Activated T-helper 1 cell treated with anti-CD3 and anti-CD28 coated beads, Interleukin-12 subunit alpha, Interleukin-12 subunit beta, Interleukin-2, Interleukin-4 antibody, amounts not matched to agents 30 ng/mL and 10 ng/mL and 1 ng/mL, durations not matched to agents 14 hours and 24 hours and 36 hours (primary cell): ENCODE measurements at regions of chr20 and their contacts with region 1.

Region 1: GRCh38 chr20:1894951-1895673 is at the start of gene SIRPA:
- DNase-seq: no peak
- H3K4me3 Mint-ChIP-seq: peak within 1 kb of the TSS; percentile 51
- H3K27ac Mint-ChIP-seq: no peak within 1 kb of the TSS
- H3K4me1 Mint-ChIP-seq: no peaks in the 10 kb centered on the region
- H3K27me3 Mint-ChIP-seq: peaks cover 61% of the 10 kb centered on the region
- total RNA-seq, gene SIRPA: not detected in 2 replicates

Region 2: GRCh38 chr20:1802385-1803060 is 92.6 kb before region 1 on chr20:
- intact Hi-C with region 1: loop called (anchors 5 kb)
- DNase-seq: peak; percentile 7
- H3K4me3 Mint-ChIP-seq: peak overlapping the region; percentile 68
- H3K27ac Mint-ChIP-seq: no peak overlapping the region
- H3K4me1 Mint-ChIP-seq: peaks cover 12% of the 10 kb centered on the region
- H3K27me3 Mint-ChIP-seq: peaks cover 44% of the 10 kb centered on the region

Region 3: GRCh38 chr20:2402271-2402980 is 507.3 kb after region 1 on chr20:
- intact Hi-C with region 1: no loop called
- DNase-seq: no peak
- H3K4me3 Mint-ChIP-seq: no peak overlapping the region
- H3K27ac Mint-ChIP-seq: no peak overlapping the region
- H3K4me1 Mint-ChIP-seq: no peaks in the 10 kb centered on the region
- H3K27me3 Mint-ChIP-seq: no peaks in the 10 kb centered on the region